CD8-positive, alpha-beta T cell (primary cell): ENCODE measurements at regions of chr20 and their contacts with region 1.

Region 1: GRCh38 chr20:39049684-39050554 is 87.8 kb downstream of the DHX35 start:
- DNase-seq: peak; percentile 59 to 90 (median 78)
- ATAC-seq: peak; percentile 91
- H3K4me3 ChIP-seq: peak overlapping the region; percentile 55 to 76
- H3K4me3 Mint-ChIP-seq: peak overlapping the region; percentile 85
- H3K27ac ChIP-seq: peak overlapping the region in 1 of 2 experiments; percentile 22
- H3K27ac Mint-ChIP-seq: peak overlapping the region; percentile 56
- H3K4me1 ChIP-seq: peaks cover 9% of the 10 kb centered on the region
- H3K4me1 Mint-ChIP-seq: peaks cover 9% of the 10 kb centered on the region
- H3K27me3 ChIP-seq: no peaks in the 10 kb centered on the region
- H3K27me3 Mint-ChIP-seq: peaks cover 8% of the 10 kb centered on the region
- CTCF ChIP-seq: peak; percentile 98

Region 2: GRCh38 chr20:38633577-38634093 is 416.3 kb before region 1 on chr20:
- CTCF ChIA-PET with region 1: interaction called, 5 read pairs
- POLR2A ChIA-PET with region 1: no interaction called
- intact Hi-C with region 1: loop called in 1 of 2 experiments (anchors 1 kb)
- DNase-seq: peak; percentile 28 to 71 (median 56)
- ATAC-seq: peak; percentile 89
- H3K4me3 ChIP-seq: no peak overlapping the region
- H3K4me3 Mint-ChIP-seq: no peak overlapping the region
- H3K27ac ChIP-seq: no peak overlapping the region
- H3K27ac Mint-ChIP-seq: no peak overlapping the region
- H3K4me1 ChIP-seq: no peaks in the 10 kb centered on the region
- H3K4me1 Mint-ChIP-seq: peaks cover 4% of the 10 kb centered on the region
- H3K27me3 ChIP-seq: peaks cover 0 to 4% of the 10 kb centered on the region in 2 experiments
- H3K27me3 Mint-ChIP-seq: peaks cover 15% of the 10 kb centered on the region
- CTCF ChIP-seq: peak; percentile 95

Region 3: DNA sequence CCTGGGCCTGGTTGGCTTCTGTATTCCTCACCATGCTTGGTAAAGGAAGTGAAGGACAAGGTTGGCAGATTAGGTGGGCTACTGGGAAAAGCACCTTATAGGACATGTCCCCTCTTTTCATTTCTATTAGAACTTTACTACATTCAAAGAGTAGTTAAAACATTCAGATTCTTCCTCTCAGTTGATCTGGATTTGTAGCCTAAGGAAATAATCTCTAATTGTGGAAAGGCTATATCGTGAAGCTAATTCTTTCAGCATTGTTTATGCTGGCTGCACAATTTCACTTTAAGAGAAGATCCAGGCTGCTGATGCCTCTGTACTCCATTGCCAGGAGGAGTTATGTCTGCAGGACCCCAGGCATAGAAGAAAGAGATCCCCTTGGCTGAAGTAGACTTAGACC is 389.5 kb before region 1 on chr20:
- CTCF ChIA-PET with region 1: no interaction called
- POLR2A ChIA-PET with region 1: no interaction called
- intact Hi-C with region 1: no loop called
- DNase-seq: no peak
- ATAC-seq: no peak
- H3K4me3 ChIP-seq: no peak overlapping the region
- H3K4me3 Mint-ChIP-seq: no peak overlapping the region
- H3K27ac ChIP-seq: no peak overlapping the region
- H3K27ac Mint-ChIP-seq: no peak overlapping the region
- H3K4me1 ChIP-seq: no peaks in the 10 kb centered on the region
- H3K4me1 Mint-ChIP-seq: no peaks in the 10 kb centered on the region
- H3K27me3 ChIP-seq: peaks cover 0 to 8% of the 10 kb centered on the region in 2 experiments
- H3K27me3 Mint-ChIP-seq: peaks cover 39% of the 10 kb centered on the region
- CTCF ChIP-seq: no peak

Region 4: GRCh38 chr20:38926142-38926933 is 123.6 kb before region 1 on chr20 and contains the start of gene FAM83D:
- CTCF ChIA-PET with region 1: interaction called, 6 read pairs
- POLR2A ChIA-PET with region 1: no interaction called
- intact Hi-C with region 1: loop called (anchors 1 to 2 kb)
- DNase-seq: peak; percentile 77 to 96 (median 91)
- ATAC-seq: peak; percentile 93
- H3K4me3 ChIP-seq: peak within 1 kb of the TSS; percentile 52 to 78
- H3K4me3 Mint-ChIP-seq: peak within 1 kb of the TSS; percentile 79
- H3K27ac ChIP-seq: peak within 1 kb of the TSS; percentile 35 to 47
- H3K27ac Mint-ChIP-seq: peak within 1 kb of the TSS; percentile 34
- H3K4me1 ChIP-seq: peaks cover 14% of the 10 kb centered on the region
- H3K4me1 Mint-ChIP-seq: peaks cover 25% of the 10 kb centered on the region
- H3K27me3 ChIP-seq: no peaks in the 10 kb centered on the region
- H3K27me3 Mint-ChIP-seq: no peaks in the 10 kb centered on the region
- CTCF ChIP-seq: no peak
- total RNA-seq, gene FAM83D: 5.3 to 6.3 TPM

Region 5: DNA sequence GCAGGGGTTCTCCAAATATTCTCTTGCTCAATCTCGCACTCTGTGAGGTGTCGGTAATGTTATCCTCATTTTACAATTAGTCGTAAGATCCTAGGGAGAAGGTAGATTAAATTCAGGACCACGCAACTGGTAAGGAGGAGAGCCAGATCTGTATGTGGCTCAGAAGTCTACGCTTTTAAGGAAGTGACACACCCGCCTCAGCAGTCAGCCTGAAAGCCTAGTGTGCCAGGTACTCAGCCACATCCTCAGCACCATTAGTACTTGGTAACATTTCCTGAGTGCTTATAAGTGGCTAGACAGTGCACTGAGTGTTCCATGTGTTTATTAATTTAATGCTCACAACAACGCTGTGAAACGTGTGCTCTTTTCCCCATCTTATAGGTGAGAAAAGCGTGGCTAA is 24.0 kb before region 1 on chr20:
- CTCF ChIA-PET with region 1: interaction called, 37 read pairs
- POLR2A ChIA-PET with region 1: no interaction called
- intact Hi-C with region 1: no loop called
- DNase-seq: peak in 2 of 9 experiments; percentile 25 to 38
- ATAC-seq: peak; percentile 54
- H3K4me3 ChIP-seq: no peak overlapping the region
- H3K4me3 Mint-ChIP-seq: no peak overlapping the region
- H3K27ac ChIP-seq: peak overlapping the region in 1 of 2 experiments; percentile 33
- H3K27ac Mint-ChIP-seq: peak overlapping the region; percentile 52
- H3K4me1 ChIP-seq: peaks cover 6% of the 10 kb centered on the region
- H3K4me1 Mint-ChIP-seq: peaks cover 17% of the 10 kb centered on the region
- H3K27me3 ChIP-seq: no peaks in the 10 kb centered on the region
- H3K27me3 Mint-ChIP-seq: no peaks in the 10 kb centered on the region
- CTCF ChIP-seq: no peak

Region 6: GRCh38 chr20:39070484-39071231 is 20.7 kb after region 1 on chr20:
- CTCF ChIA-PET with region 1: interaction called, 391 read pairs
- POLR2A ChIA-PET with region 1: no interaction called
- intact Hi-C with region 1: no loop called
- DNase-seq: no peak
- ATAC-seq: no peak
- H3K4me3 ChIP-seq: no peak overlapping the region
- H3K4me3 Mint-ChIP-seq: no peak overlapping the region
- H3K27ac ChIP-seq: no peak overlapping the region
- H3K27ac Mint-ChIP-seq: no peak overlapping the region
- H3K4me1 ChIP-seq: no peaks in the 10 kb centered on the region
- H3K4me1 Mint-ChIP-seq: no peaks in the 10 kb centered on the region
- H3K27me3 ChIP-seq: no peaks in the 10 kb centered on the region
- H3K27me3 Mint-ChIP-seq: peaks cover 22% of the 10 kb centered on the region
- CTCF ChIP-seq: no peak

Region 7: GRCh38 chr20:39090906-39091305 is 41.0 kb after region 1 on chr20:
- CTCF ChIA-PET with region 1: interaction called, 391 read pairs
- POLR2A ChIA-PET with region 1: no interaction called
- intact Hi-C with region 1: no loop called
- DNase-seq: no peak
- ATAC-seq: no peak
- H3K4me3 ChIP-seq: no peak overlapping the region
- H3K4me3 Mint-ChIP-seq: no peak overlapping the region
- H3K27ac ChIP-seq: no peak overlapping the region
- H3K27ac Mint-ChIP-seq: no peak overlapping the region
- H3K4me1 ChIP-seq: no peaks in the 10 kb centered on the region
- H3K4me1 Mint-ChIP-seq: no peaks in the 10 kb centered on the region
- H3K27me3 ChIP-seq: no peaks in the 10 kb centered on the region
- H3K27me3 Mint-ChIP-seq: peaks cover 7% of the 10 kb centered on the region
- CTCF ChIP-seq: no peak

Region 8: DNA sequence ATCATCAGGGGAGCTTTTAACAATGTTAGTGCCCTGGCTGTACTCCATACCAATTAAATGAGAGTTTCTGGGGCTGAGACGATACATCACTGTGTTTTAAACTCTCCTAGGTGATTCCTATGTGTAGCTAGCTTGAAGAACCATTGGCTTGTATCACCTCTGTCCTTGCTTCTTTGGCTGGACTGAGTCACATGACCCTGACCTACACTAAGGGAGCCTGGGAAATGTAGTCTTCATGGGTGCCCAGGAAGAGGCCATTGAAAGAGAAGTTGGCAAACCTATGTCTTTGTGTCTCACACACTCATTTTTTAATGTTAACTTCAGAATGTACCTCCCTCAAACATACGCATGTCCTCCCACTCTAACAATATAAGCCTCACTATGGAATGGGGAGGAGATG is 418.8 kb after region 1 on chr20:
- CTCF ChIA-PET with region 1: no interaction called
- POLR2A ChIA-PET with region 1: no interaction called
- intact Hi-C with region 1: no loop called
- DNase-seq: no peak
- ATAC-seq: no peak
- H3K4me3 ChIP-seq: no peak overlapping the region
- H3K4me3 Mint-ChIP-seq: no peak overlapping the region
- H3K27ac ChIP-seq: no peak overlapping the region
- H3K27ac Mint-ChIP-seq: no peak overlapping the region
- H3K4me1 ChIP-seq: no peaks in the 10 kb centered on the region
- H3K4me1 Mint-ChIP-seq: no peaks in the 10 kb centered on the region
- H3K27me3 ChIP-seq: no peaks in the 10 kb centered on the region
- H3K27me3 Mint-ChIP-seq: peaks cover 5% of the 10 kb centered on the region
- CTCF ChIP-seq: no peak

Region 9: GRCh38 chr20:40741507-40742106 is 1691.7 kb after region 1 on chr20:
- CTCF ChIA-PET with region 1: no interaction called
- POLR2A ChIA-PET with region 1: no interaction called
- intact Hi-C with region 1: no loop called
- DNase-seq: peak in 7 of 9 experiments; percentile 8 to 64 (median 27)
- ATAC-seq: no peak
- H3K4me3 ChIP-seq: no peak overlapping the region
- H3K4me3 Mint-ChIP-seq: no peak overlapping the region
- H3K27ac ChIP-seq: no peak overlapping the region
- H3K27ac Mint-ChIP-seq: no peak overlapping the region
- H3K4me1 ChIP-seq: no peaks in the 10 kb centered on the region
- H3K4me1 Mint-ChIP-seq: no peaks in the 10 kb centered on the region
- H3K27me3 ChIP-seq: no peaks in the 10 kb centered on the region
- H3K27me3 Mint-ChIP-seq: peaks cover 2% of the 10 kb centered on the region
- CTCF ChIP-seq: no peak